MCF 10A (cell line): ENCODE measurements at regions of chr20 and their contacts with region 1.

Region 1: DNA sequence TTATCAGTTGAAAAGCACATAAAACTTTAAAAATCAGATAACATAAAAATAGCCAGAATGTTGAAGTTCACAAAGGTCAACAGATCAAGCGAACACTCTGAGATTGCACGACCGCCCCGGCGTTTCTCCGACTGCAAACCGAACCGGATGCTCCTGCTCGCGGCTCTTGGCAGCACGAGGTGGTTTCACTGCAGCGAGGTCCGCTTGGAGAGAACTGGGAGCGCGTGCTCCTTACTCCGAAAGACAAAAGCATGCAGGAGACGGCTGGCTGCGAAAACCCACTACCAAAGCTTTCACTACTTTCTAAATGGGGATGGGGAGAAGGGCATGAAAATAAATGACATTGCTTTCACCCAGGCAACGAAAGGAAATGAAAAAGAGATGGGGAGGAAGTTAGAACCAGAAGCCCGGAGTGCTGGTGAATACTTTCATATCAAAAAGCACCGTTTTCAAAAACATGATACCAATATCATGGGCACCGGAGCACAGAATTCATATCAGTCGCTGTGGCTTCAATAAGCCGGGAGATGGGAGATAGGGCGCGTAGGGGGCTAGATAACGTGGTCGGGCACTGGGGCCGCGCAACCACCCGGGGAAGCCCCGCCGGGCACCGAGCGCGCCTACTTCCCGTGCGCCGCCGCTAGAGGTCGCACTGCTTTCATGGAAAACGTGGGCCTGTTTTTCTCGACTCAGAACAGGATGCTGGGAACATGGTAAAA is 8.3 kb upstream of the ANKRD60 start:
- DNase-seq: peak; percentile 71
- H3K4me3 Mint-ChIP-seq: peak overlapping the region; percentile 77
- H3K27ac Mint-ChIP-seq: no peak overlapping the region
- H3K4me1 Mint-ChIP-seq: no peaks in the 10 kb centered on the region
- H3K27me3 Mint-ChIP-seq: no peaks in the 10 kb centered on the region
- CTCF ChIP-seq: peak; percentile 96

Region 2: DNA sequence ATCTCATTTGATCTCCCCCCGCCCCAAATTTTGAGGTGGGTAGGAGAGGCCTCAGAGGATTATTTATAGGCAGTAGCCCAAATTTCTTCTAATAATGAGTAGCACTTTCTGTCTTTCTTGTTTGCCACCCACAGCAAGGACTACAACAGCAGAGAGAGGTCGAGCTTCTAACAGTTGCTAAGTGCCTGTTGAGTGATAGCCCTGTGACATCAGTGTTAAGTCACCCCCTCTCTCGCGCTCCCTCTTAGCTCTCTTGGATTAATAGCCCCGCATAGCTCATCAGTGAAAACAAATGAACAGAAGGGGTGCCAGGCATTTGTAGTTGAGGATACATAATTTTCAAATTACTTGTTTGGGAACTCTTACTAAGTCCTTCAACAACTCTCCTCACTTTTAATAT is 11.8 kb before region 1 on chr20:
- CTCF ChIA-PET with region 1: interaction called, 12 read pairs
- POLR2A ChIA-PET with region 1: no interaction called
- intact Hi-C with region 1: no loop called
- DNase-seq: no peak
- H3K4me3 Mint-ChIP-seq: no peak overlapping the region
- H3K27ac Mint-ChIP-seq: no peak overlapping the region
- H3K4me1 Mint-ChIP-seq: no peaks in the 10 kb centered on the region
- H3K27me3 Mint-ChIP-seq: peaks cover 29% of the 10 kb centered on the region
- CTCF ChIP-seq: no peak

Region 3: GRCh38 chr20:58331961-58332551 is 95.3 kb after region 1 on chr20:
- CTCF ChIA-PET with region 1: no interaction called
- POLR2A ChIA-PET with region 1: no interaction called
- intact Hi-C with region 1: no loop called
- DNase-seq: no peak
- H3K4me3 Mint-ChIP-seq: no peak overlapping the region
- H3K27ac Mint-ChIP-seq: no peak overlapping the region
- H3K4me1 Mint-ChIP-seq: peaks cover 6% of the 10 kb centered on the region
- H3K27me3 Mint-ChIP-seq: no peaks in the 10 kb centered on the region
- CTCF ChIP-seq: no peak

Region 4: DNA sequence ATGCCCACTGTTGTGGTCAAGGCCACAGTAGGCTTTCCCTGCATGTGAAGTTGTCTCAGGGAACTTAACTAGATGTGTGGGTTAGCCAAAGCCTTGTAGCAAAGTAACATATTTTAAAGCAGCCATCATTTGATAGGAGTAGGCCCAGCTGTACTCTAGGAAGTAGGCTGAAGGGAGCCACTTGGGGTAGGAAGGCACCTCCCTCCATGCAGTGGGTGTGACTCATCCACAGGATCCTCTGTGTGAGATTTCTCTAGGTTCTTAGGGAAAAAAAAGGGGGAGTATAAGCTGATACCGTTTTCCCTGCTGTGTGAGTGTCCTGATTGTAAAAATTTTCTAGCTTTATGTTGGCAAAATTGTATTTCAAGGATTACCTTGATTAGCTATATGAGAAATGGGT is 197.0 kb after region 1 on chr20:
- CTCF ChIA-PET with region 1: interaction called, 10 read pairs
- POLR2A ChIA-PET with region 1: no interaction called
- intact Hi-C with region 1: no loop called
- DNase-seq: peak; percentile 34
- H3K4me3 Mint-ChIP-seq: no peak overlapping the region
- H3K27ac Mint-ChIP-seq: peak overlapping the region; percentile 16
- H3K4me1 Mint-ChIP-seq: peaks cover 14% of the 10 kb centered on the region
- H3K27me3 Mint-ChIP-seq: no peaks in the 10 kb centered on the region
- CTCF ChIP-seq: no peak

Region 5: DNA sequence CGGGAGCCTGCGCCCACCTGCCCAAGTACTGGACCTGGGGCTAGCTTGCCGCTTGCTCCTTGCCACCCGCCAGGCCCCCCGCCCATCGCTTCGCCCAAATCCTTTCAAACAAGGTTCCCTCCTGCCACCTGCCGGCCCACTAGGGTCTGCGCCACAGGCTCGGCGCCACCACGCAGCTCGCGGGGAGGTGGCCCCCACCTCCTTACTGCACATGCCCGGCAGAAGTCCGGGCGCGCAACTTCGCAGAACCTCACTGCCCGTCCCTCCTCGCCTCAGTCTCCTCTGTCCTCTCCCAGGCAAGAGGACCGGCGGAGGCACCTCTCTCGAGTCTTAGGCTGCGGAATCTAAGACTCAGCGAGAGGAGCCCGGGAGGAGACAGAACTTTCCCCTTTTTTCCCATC is 602.7 kb after region 1 on chr20:
- CTCF ChIA-PET with region 1: interaction called, 13 read pairs
- POLR2A ChIA-PET with region 1: no interaction called
- intact Hi-C with region 1: loop called (anchors 5 kb)
- DNase-seq: no peak
- H3K4me3 Mint-ChIP-seq: peak overlapping the region; percentile 22
- H3K27ac Mint-ChIP-seq: no peak overlapping the region
- H3K4me1 Mint-ChIP-seq: no peaks in the 10 kb centered on the region
- H3K27me3 Mint-ChIP-seq: peaks cover 28% of the 10 kb centered on the region
- CTCF ChIP-seq: peak; percentile 35

Region 6: GRCh38 chr20:58850693-58851174 is 614.0 kb after region 1 on chr20 and contains the start of gene GNAS-AS1:
- CTCF ChIA-PET with region 1: interaction called, 21 read pairs
- POLR2A ChIA-PET with region 1: no interaction called
- intact Hi-C with region 1: loop called (anchors 1 kb)
- DNase-seq: peak; percentile 79
- H3K4me3 Mint-ChIP-seq: peak within 1 kb of the TSS; percentile 88
- H3K27ac Mint-ChIP-seq: peak within 1 kb of the TSS; percentile 81
- H3K4me1 Mint-ChIP-seq: peaks cover 21% of the 10 kb centered on the region
- H3K27me3 Mint-ChIP-seq: peaks cover 42% of the 10 kb centered on the region
- CTCF ChIP-seq: no peak
- total RNA-seq, gene GNAS-AS1: 1.6 and 2.2 TPM in 2 replicates